ENCODE measurements at regions of chr6 and their contacts with region 1.

Region 1: DNA sequence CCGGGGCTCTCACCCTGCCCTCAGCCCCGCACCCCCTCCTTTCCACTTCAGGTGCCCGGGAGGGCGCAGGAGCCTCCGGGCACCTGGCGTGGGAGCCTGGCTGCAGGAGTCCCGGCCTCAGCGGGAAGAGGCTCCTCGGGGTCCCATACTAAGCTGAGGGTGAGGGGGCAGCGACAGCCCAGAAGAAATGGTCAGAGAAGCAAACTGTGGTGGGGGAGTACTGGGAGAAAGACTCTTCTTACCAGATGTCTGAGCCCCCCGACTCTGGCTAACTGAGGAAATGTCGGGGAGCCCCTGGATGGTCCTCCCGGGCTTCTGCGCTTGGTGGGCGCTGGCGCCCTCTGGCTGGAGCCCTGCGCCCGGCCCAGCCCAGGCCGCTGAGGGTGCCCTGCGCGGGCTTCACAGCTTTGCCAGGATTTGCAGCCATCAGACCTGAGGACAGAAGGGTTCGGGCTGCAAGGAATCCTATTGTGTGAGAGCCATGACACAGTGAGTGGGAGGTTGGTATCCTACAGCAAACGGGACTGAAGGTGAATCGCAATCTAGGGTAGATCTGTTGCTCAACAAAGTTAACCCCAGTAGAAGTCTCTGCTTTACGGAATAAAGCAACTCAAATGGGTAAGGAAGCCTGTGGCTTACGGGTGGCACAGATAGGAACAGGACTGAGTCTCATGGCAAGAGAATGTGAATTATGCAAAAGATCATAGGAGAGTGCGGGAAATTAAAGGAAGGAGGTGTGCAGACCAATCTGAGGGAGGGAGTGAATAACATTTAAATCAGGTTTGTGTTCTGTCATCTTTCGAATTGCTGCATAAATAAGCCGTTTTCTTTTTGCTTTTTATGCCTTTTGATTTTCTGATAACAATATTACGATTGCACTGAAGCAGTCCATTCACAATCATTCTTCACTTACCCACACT is 639 bp upstream of the RCAN2 start:
- DNase-seq: peak; percentile 44 to 84
- H3K4me3 ChIP-seq: peak overlapping the region; percentile 73 to 88
- H3K27ac ChIP-seq: peak overlapping the region; percentile 96 to 97
- H3K4me1 ChIP-seq: peaks cover 0 to 49% (median 11%) of the 10 kb centered on the region in 4 donors
- H3K27me3 ChIP-seq: no peaks in the 10 kb centered on the region
- CTCF ChIP-seq: peak; percentile 66 to 83

Region 2: GRCh38 chr6:44681761-44682160 is 1810.1 kb before region 1 on chr6:
- intact Hi-C with region 1: no loop called
- DNase-seq: no peak
- H3K4me3 ChIP-seq: no peak overlapping the region
- H3K27ac ChIP-seq: no peak overlapping the region
- H3K4me1 ChIP-seq: no peaks in the 10 kb centered on the region
- H3K27me3 ChIP-seq: no peaks in the 10 kb centered on the region
- CTCF ChIP-seq: no peak

Region 3: GRCh38 chr6:46217671-46218131 is 274.2 kb before region 1 on chr6:
- intact Hi-C with region 1: loop called (anchors 10 kb)
- DNase-seq: peak; percentile 70 to 89
- H3K4me3 ChIP-seq: no peak overlapping the region
- H3K27ac ChIP-seq: peak overlapping the region; percentile 79 to 89
- H3K4me1 ChIP-seq: peaks cover 5 to 50% (median 21%) of the 10 kb centered on the region in 4 donors
- H3K27me3 ChIP-seq: no peaks in the 10 kb centered on the region
- CTCF ChIP-seq: no peak

Region 4: GRCh38 chr6:46263707-46264086 is 228.2 kb before region 1 on chr6:
- intact Hi-C with region 1: no loop called
- DNase-seq: no peak
- H3K4me3 ChIP-seq: no peak overlapping the region
- H3K27ac ChIP-seq: no peak overlapping the region
- H3K4me1 ChIP-seq: peaks cover 0 to 55% (median 7%) of the 10 kb centered on the region in 4 donors
- H3K27me3 ChIP-seq: no peaks in the 10 kb centered on the region
- CTCF ChIP-seq: no peak

Region 5: GRCh38 chr6:46393940-46394337 is 97.9 kb before region 1 on chr6:
- intact Hi-C with region 1: no loop called
- DNase-seq: no peak
- H3K4me3 ChIP-seq: no peak overlapping the region
- H3K27ac ChIP-seq: no peak overlapping the region
- H3K4me1 ChIP-seq: peaks cover 0 to 50% (median 2%) of the 10 kb centered on the region in 4 donors
- H3K27me3 ChIP-seq: no peaks in the 10 kb centered on the region
- CTCF ChIP-seq: no peak

Region 6: GRCh38 chr6:46419576-46420002 is 72.3 kb before region 1 on chr6:
- intact Hi-C with region 1: loop called (anchors 2 kb)
- DNase-seq: peak; percentile 63 to 76
- H3K4me3 ChIP-seq: no peak overlapping the region
- H3K27ac ChIP-seq: peak overlapping the region; percentile 50 to 53
- H3K4me1 ChIP-seq: peaks cover 0 to 65% (median 13%) of the 10 kb centered on the region in 4 donors
- H3K27me3 ChIP-seq: no peaks in the 10 kb centered on the region
- CTCF ChIP-seq: peak; percentile 74 to 75

Region 7: DNA sequence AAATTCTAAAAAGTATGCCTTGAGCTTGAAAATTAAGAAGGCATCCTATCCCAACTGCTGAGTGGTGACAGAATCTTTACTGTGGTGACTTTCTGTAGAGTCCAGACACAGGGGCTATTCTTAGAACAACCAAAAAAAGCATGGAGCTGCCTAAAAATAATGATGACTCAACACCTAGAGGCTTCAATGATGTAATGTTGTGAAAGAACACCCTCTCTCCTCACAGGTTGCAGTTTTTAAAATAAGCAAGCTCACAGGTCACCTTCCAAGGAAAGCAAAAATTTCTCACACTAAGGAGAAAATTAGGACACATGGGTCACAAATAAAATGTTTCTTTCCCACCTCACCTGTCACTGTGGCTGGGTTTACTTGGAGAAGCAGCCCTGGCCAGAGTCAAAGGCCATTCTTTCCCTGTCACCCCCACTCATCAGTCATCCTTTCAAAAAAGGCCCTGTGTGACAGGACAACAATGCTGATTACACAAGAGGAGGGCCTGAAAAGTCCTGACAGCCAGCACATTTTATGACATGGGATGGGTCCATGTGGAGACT is 54.1 kb before region 1 on chr6:
- intact Hi-C with region 1: no loop called
- DNase-seq: no peak
- H3K4me3 ChIP-seq: no peak overlapping the region
- H3K27ac ChIP-seq: peak overlapping the region; percentile 77 to 83
- H3K4me1 ChIP-seq: peaks cover 9 to 91% (median 31%) of the 10 kb centered on the region in 4 donors
- H3K27me3 ChIP-seq: no peaks in the 10 kb centered on the region
- CTCF ChIP-seq: no peak